CD8-positive, alpha-beta T cell (primary cell): ENCODE measurements at regions of chr12 and their contacts with region 1.

Region 1: DNA sequence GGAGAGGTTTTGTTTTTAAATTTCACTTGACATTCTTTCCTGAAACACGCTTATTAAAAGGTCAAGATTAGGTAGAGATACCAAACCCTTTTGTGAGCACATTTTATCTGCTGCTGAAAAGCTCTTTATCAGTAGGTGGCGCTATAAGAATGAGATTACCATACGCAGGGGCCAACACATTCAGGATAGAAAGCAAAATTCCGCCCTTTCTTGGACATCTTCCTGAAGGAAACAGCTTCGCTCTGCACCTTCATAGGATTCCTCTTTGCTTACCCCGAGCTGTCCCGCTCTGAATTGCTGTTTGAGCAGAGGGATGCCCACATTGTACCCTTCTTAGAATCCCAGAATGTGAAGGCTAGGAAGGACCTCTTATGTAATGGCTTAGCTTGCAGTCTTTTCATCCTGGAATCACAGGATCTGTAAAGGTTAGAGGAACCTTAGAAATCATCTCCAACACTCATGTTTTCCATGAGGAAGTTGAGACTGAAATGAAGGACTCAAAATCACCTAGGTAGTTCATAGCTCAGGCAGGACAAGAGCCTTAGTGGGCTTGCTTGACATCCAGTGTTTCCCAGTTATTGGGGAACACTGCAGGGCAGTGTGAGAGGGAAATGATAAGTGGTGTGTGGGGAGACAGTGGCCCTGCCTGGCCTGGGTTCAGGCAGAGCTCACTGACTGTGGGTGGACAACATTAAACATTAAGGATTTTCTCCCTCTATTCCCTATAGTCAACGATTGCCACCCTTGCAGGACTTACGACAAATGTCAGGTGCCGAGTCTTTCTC is 38.7 kb upstream of the CRY1 start:
- DNase-seq: peak in 4 of 9 experiments; percentile 17 to 65 (median 52)
- ATAC-seq: peak; percentile 51
- H3K4me3 ChIP-seq: no peak overlapping the region
- H3K4me3 Mint-ChIP-seq: no peak overlapping the region
- H3K27ac ChIP-seq: no peak overlapping the region
- H3K27ac Mint-ChIP-seq: no peak overlapping the region
- H3K4me1 ChIP-seq: no peaks in the 10 kb centered on the region
- H3K4me1 Mint-ChIP-seq: peaks cover 4% of the 10 kb centered on the region
- H3K27me3 ChIP-seq: no peaks in the 10 kb centered on the region
- H3K27me3 Mint-ChIP-seq: no peaks in the 10 kb centered on the region
- CTCF ChIP-seq: peak; percentile 79

Region 2: GRCh38 chr12:107144441-107144840 is 12.4 kb after region 1 on chr12:
- CTCF ChIA-PET with region 1: interaction called, 33 read pairs
- POLR2A ChIA-PET with region 1: interaction called, 3 read pairs
- intact Hi-C with region 1: no loop called
- DNase-seq: no peak
- ATAC-seq: no peak
- H3K4me3 ChIP-seq: no peak overlapping the region
- H3K4me3 Mint-ChIP-seq: no peak overlapping the region
- H3K27ac ChIP-seq: no peak overlapping the region
- H3K27ac Mint-ChIP-seq: no peak overlapping the region
- H3K4me1 ChIP-seq: no peaks in the 10 kb centered on the region
- H3K4me1 Mint-ChIP-seq: no peaks in the 10 kb centered on the region
- H3K27me3 ChIP-seq: no peaks in the 10 kb centered on the region
- H3K27me3 Mint-ChIP-seq: no peaks in the 10 kb centered on the region
- CTCF ChIP-seq: no peak

Region 3: GRCh38 chr12:107402041-107403022 is 270.3 kb after region 1 on chr12:
- CTCF ChIA-PET with region 1: interaction called, 165 read pairs
- POLR2A ChIA-PET with region 1: interaction called, 8 read pairs
- intact Hi-C with region 1: loop called (anchors 1 kb)
- DNase-seq: peak; percentile 28 to 77 (median 62)
- ATAC-seq: peak; percentile 51
- H3K4me3 ChIP-seq: no peak overlapping the region
- H3K4me3 Mint-ChIP-seq: no peak overlapping the region
- H3K27ac ChIP-seq: no peak overlapping the region
- H3K27ac Mint-ChIP-seq: no peak overlapping the region
- H3K4me1 ChIP-seq: peaks cover 30% of the 10 kb centered on the region
- H3K4me1 Mint-ChIP-seq: peaks cover 40% of the 10 kb centered on the region
- H3K27me3 ChIP-seq: no peaks in the 10 kb centered on the region
- H3K27me3 Mint-ChIP-seq: no peaks in the 10 kb centered on the region
- CTCF ChIP-seq: peak; percentile 71

Region 4: DNA sequence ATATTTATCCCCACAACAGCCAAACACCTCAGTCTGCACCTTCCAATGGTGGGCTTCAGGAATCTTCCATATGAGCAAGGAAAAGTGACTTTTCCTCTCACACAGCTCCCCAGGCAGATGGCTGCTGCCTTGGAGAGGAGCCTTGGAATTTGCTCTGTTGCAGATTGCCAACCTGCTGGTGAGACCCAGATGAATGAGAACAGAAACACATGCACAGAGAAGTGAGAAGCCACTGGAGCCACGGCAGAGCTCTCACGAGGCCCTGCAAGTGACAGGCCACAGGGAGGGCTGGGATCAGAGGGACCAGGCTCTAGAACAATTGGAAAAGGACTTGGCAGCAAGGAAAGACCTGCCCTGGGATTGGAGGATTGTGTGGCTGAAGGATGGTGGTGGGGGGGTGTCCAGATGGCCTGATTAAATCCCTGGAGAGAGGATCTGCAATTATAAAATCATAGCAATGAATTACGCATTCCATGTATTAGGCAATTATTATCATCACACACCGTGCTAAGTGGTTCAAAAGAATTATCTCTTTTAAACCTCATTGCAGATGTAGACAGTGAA is 468.6 kb after region 1 on chr12:
- CTCF ChIA-PET with region 1: interaction called, 394 read pairs
- POLR2A ChIA-PET with region 1: no interaction called
- intact Hi-C with region 1: no loop called
- DNase-seq: no peak
- ATAC-seq: no peak
- H3K4me3 ChIP-seq: no peak overlapping the region
- H3K4me3 Mint-ChIP-seq: no peak overlapping the region
- H3K27ac ChIP-seq: no peak overlapping the region
- H3K27ac Mint-ChIP-seq: no peak overlapping the region
- H3K4me1 ChIP-seq: no peaks in the 10 kb centered on the region
- H3K4me1 Mint-ChIP-seq: no peaks in the 10 kb centered on the region
- H3K27me3 ChIP-seq: no peaks in the 10 kb centered on the region
- H3K27me3 Mint-ChIP-seq: no peaks in the 10 kb centered on the region
- CTCF ChIP-seq: no peak

Region 5: GRCh38 chr12:107622005-107622404 is 490.0 kb after region 1 on chr12:
- CTCF ChIA-PET with region 1: interaction called, 394 read pairs
- POLR2A ChIA-PET with region 1: no interaction called
- intact Hi-C with region 1: no loop called
- DNase-seq: peak in 1 of 9 experiments; percentile 20
- ATAC-seq: no peak
- H3K4me3 ChIP-seq: no peak overlapping the region
- H3K4me3 Mint-ChIP-seq: no peak overlapping the region
- H3K27ac ChIP-seq: no peak overlapping the region
- H3K27ac Mint-ChIP-seq: no peak overlapping the region
- H3K4me1 ChIP-seq: no peaks in the 10 kb centered on the region
- H3K4me1 Mint-ChIP-seq: no peaks in the 10 kb centered on the region
- H3K27me3 ChIP-seq: no peaks in the 10 kb centered on the region
- H3K27me3 Mint-ChIP-seq: no peaks in the 10 kb centered on the region
- CTCF ChIP-seq: no peak